Activated T-helper 2 cell treated with anti-CD3 and anti-CD28 coated beads, Interferon-gamma antibody, Interleukin-2, Interleukin-4, amounts not matched to agents 10 μg/mL and 5 μg/mL and 100 μg/mL, durations not matched to agents 14 hours and 24 hours and 36 hours (primary cell): ENCODE measurements at regions of chr15 and their contacts with region 1.

Region 1: GRCh38 chr15:89556413-89557262 is 18.6 kb upstream of the TICRR start:
- DNase-seq: no peak
- H3K4me3 Mint-ChIP-seq: no peak overlapping the region
- H3K27ac Mint-ChIP-seq: no peak overlapping the region
- H3K4me1 Mint-ChIP-seq: no peaks in the 10 kb centered on the region
- H3K27me3 Mint-ChIP-seq: peaks cover 12% of the 10 kb centered on the region

Region 2: DNA sequence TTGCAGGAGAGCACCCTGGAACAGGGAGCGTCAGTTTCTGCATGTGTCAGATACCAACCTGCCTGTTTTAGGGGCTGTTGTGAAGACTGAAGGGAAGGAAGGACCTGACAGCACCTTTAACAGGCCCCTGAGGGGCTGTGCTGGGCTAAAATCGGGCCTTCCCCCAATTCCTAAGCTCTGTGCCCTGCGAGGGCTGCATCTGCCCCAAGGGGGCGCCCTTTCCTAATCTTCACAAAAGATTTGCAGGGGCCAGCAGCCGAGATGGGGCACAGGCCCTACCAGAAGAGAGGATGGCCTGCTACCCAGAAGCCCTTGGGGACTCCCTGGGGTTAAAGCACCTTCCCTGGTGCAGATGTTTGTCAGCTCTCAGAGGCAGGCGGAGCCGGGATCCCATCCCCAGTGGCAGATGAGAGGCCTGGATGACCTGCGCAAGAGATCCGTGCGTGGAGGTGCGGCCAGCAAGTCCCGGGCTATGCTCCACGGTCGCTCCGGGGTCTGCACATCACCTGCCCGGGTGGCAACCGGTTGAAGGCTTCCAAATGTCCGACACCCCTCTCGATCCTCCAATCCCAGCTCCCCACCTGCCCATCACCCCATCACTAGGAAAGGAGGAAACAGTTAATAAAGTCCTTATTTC is 113.8 kb before region 1 on chr15:
- intact Hi-C with region 1: loop called (anchors 5 kb)
- DNase-seq: peak; percentile 31
- H3K4me3 Mint-ChIP-seq: no peak overlapping the region
- H3K27ac Mint-ChIP-seq: no peak overlapping the region
- H3K4me1 Mint-ChIP-seq: peaks cover 2% of the 10 kb centered on the region
- H3K27me3 Mint-ChIP-seq: peaks cover 5% of the 10 kb centered on the region

Region 3: DNA sequence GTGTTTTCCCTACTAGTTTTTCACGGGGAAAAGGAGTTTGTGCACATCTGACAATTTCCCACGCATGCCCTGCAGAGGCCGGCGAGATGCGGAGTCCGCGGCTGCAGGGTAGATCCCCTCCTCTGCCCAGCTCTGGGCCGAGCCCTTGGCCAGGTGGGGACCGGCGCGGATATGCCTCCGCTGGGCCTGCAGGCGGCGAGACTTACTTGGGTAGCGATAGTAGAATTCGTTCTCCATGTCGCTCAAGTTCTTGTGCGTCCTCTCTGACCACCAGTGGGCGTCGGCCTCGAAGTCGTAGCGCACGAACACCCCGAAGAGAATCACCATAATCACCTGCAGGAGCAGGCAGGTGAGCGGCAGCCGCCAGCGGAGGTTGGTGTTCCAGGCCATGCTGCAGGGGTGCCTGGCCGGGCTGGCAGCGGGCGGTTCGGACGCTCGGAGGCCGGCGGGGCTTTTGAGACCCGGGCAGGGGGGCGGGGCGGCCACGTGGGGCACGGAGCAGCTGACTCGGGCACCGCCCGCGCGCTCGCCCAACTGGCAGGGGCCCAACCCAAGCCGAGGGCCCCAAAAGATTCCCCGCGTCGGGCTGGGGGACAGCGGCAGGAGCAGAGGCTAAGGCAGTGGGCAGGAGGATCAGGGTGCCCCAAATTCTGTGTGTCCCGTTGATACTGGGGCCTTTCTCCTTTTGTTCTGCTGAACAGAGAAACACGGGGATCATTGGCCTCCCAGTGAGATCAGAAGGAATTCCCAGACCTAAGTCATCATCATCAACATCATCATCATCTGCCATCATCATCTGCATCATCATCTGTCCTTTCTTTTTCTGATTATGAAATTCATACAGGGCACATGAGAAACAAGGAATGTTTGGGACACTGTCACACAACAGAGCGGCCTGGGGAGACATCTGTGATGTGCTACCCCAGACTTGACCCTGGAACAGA is 60.2 kb before region 1 on chr15 and contains the start of gene RHCG:
- intact Hi-C with region 1: loop called (anchors 5 kb)
- DNase-seq: no peak
- H3K4me3 Mint-ChIP-seq: no peak within 1 kb of the TSS
- H3K27ac Mint-ChIP-seq: no peak within 1 kb of the TSS
- H3K4me1 Mint-ChIP-seq: peaks cover 5% of the 10 kb centered on the region
- H3K27me3 Mint-ChIP-seq: peaks cover 36% of the 10 kb centered on the region
- total RNA-seq, gene RHCG: not detected in 2 replicates